HAP-1 (cell line): ENCODE measurements at regions of chr16 and their contacts with region 1.

Region 1: GRCh38 chr16:22898874-22899348 is 84.9 kb downstream of the HS3ST2 start:
- DNase-seq: peak; percentile 56 to 86
- H3K4me3 ChIP-seq: no peak overlapping the region
- H3K4me1 ChIP-seq: no peaks in the 10 kb centered on the region
- H3K27me3 ChIP-seq: 0 out of 2 replicates have a peak, but pooled peaks cover 3% of the 10 kb centered on the region

Region 2: DNA sequence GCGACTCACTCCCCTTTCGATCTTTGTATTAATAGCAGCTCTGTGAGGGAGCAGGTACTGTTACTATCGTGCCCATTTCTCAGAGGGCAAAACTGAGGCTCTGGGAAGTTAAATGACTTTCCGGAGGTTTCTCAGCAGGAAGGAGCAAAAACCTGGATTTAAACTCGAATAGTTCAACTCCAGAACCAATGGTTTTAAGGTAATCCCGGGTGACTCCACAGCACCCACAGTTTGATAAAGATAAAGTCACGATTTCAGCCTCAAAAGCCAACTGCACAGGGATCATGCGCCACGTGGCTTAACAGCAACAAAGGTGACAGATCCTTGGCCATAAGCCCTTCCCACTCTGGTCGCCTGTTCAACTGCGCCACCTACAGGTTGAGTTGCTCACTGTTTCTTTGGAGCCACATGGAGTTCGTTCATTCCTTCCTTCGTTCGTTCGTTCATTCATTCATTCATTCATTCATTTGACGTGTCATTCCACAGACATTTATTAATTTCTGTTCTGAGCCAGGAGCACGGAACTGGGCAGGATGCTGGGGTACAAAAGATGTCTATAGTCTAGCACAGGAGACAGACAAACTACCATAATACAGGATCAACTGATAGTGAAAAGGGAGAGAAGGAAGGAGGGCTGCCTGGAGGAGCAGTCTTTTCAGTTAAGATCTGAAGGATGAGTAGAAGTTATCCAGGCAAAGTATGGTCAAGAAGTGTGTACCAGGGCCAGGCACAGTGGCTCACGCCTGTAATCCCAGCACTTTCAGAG is 49.9 kb after region 1 on chr16:
- in situ Hi-C with region 1: loop called (anchors 5 kb)
- DNase-seq: peak; percentile 59 to 80
- H3K4me3 ChIP-seq: no peak overlapping the region
- H3K4me1 ChIP-seq: no peaks in the 10 kb centered on the region
- H3K27me3 ChIP-seq: no peaks in the 10 kb centered on the region

Region 3: GRCh38 chr16:23435500-23435899 is 536.6 kb after region 1 on chr16:
- in situ Hi-C with region 1: loop called (anchors 10 kb)
- DNase-seq: peak; percentile 66 to 84
- H3K4me3 ChIP-seq: no peak overlapping the region
- H3K4me1 ChIP-seq: no peaks in the 10 kb centered on the region
- H3K27me3 ChIP-seq: no peaks in the 10 kb centered on the region